ENCODE measurements at regions of chrX and their contacts with region 1.

Region 1: DNA sequence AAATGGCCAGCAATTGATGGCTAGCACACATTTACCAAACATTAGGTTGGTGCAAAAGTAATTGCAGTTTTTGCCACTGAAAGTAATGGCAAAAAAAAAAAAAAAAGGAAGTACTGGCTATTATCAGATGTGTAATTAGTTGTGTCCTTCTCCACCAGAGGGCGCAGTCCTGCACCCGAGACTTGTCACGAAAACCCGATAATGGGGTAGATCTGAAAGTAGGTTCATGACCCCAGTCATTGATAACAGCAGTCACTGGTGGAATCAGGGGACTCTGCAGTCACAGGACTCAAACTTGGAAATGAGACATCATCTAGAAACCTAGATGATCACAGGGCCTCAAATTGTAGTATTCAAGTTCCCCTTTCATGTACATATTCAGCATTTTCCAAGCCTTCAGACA is 13.1 kb upstream of the ACOT9 start:
- DNase-seq: peak; percentile 73
- H3K4me3 ChIP-seq: no peak overlapping the region
- H3K27ac ChIP-seq: no peak overlapping the region
- H3K4me1 ChIP-seq: no peaks in the 10 kb centered on the region
- CTCF ChIP-seq: peak; percentile 81

Region 2: DNA sequence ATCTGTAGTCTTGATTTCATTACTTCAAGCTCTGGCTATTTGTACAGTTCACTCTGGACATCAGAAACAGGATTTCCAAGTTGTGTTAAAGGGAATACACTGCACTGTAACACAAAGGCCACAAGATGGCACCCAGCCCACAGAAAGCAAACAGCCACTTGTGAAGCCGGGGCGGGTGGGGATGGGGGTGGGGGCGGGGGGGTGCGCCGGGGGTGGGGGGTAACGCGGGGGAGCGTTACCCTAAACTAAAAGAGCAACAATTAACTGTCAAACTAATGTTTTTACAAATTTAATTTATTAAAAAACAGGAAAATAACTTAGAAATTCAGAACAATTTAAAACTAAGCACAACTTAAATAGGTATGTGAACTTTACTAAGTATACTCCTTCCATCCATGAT is 61.6 kb before region 1 on chrX:
- CTCF ChIA-PET with region 1: no interaction called
- POLR2A ChIA-PET with region 1: no interaction called
- intact Hi-C with region 1: loop called (anchors 10 kb)
- DNase-seq: peak; percentile 65
- H3K4me3 ChIP-seq: no peak overlapping the region
- H3K27ac ChIP-seq: no peak overlapping the region
- H3K4me1 ChIP-seq: no peaks in the 10 kb centered on the region
- CTCF ChIP-seq: peak; percentile 41

Region 3: DNA sequence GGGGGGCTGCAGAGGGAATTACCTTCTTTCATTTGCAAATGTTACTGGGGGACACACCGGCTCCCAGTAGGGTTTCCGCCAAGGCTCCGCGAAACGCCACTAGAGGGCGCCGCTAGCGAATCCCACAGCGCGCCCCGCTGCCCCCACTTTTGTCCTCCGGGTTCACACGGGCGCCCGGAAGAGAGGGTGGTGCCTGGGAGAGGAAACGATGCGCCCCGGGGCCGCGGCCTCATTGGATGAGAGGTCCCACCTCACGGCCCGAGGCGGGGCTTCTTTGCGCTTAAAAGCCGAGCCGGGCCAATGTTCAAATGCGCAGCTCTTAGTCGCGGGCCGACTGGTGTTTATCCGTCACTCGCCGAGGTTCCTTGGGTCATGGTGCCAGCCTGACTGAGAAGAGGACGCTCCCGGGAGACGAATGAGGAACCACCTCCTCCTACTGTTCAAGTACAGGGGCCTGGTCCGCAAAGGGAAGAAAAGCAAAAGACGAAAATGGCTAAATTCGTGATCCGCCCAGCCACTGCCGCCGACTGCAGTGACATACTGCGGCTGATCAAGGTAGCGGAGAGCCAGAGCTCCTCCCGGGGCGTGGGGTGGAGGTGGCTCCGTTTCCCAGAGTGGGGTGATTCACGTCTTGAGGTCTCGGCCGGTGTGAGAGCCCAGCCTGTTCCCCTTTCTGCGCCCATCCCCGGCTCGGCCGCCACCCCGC is 26.9 kb after region 1 on chrX and contains the start of gene SAT1:
- CTCF ChIA-PET with region 1: no interaction called
- POLR2A ChIA-PET with region 1: no interaction called
- intact Hi-C with region 1: loop called (anchors 1 kb)
- DNase-seq: peak; percentile 95
- H3K4me3 ChIP-seq: peak within 1 kb of the TSS; percentile 89
- H3K27ac ChIP-seq: peak within 1 kb of the TSS; percentile 59
- H3K4me1 ChIP-seq: peaks cover 26% of the 10 kb centered on the region
- CTCF ChIP-seq: peak; percentile 81
- total RNA-seq, gene SAT1: 46.9 and 75.9 TPM in 2 replicates

Region 4: DNA sequence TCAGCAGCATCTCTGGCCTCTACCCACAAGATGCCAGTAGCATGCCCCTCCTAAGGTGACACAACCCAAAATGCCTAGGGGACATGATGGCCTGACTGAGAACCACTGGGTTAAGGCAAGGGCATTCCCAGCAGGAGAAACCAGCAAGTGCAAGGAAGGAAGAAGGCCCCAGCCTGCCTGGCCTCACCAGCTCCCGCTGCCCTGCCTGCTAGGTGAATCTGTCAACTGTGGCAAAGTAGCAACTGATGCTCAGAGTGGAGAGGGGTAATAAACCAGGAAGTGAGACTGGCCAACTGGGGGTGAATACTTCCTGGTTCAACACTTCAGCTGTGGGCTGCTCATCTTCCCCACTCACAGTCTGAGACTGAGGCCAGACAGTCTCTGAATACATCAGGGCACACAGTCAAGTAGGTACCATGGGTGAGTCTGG is 61.0 kb after region 1 on chrX:
- CTCF ChIA-PET with region 1: no interaction called
- POLR2A ChIA-PET with region 1: no interaction called
- intact Hi-C with region 1: no loop called
- DNase-seq: peak; percentile 72
- H3K4me3 ChIP-seq: no peak overlapping the region
- H3K27ac ChIP-seq: peak overlapping the region; percentile 42
- H3K4me1 ChIP-seq: peaks cover 10% of the 10 kb centered on the region
- CTCF ChIP-seq: no peak

Region 5: DNA sequence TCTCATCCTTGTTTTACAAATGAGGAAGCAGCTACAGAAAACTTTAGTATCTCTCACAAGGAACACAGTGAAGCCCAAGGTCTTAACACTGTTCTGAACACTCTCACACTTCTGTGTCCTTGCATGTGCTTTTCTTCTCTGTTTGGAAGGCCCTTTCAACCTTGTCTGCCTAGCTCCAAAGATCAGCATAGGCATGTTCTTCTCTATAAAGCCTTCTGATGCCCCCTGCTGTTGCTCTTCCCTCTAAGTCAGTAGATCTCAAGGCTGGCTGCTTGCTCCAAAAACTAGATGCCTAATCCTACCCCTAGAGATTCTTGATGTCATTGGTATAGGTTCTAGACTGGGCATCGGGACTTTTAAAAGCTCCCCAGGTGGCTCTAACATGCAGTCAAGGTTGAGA is 145.6 kb after region 1 on chrX:
- CTCF ChIA-PET with region 1: interaction called, 4 read pairs
- POLR2A ChIA-PET with region 1: no interaction called
- intact Hi-C with region 1: loop called (anchors 1 kb)
- DNase-seq: peak; percentile 71
- H3K4me3 ChIP-seq: no peak overlapping the region
- H3K27ac ChIP-seq: no peak overlapping the region
- H3K4me1 ChIP-seq: peaks cover 24% of the 10 kb centered on the region
- CTCF ChIP-seq: peak; percentile 56